ENCODE measurements at regions of chr9 and their contacts with region 1.

Region 1: GRCh38 chr9:3521966-3522365 is 3.8 kb downstream of the RFX3 start:
- DNase-seq: no peak
- H3K4me3 Mint-ChIP-seq: no peak overlapping the region
- H3K27ac Mint-ChIP-seq: no peak overlapping the region
- H3K4me1 Mint-ChIP-seq: no peaks in the 10 kb centered on the region
- H3K27me3 Mint-ChIP-seq: no peaks in the 10 kb centered on the region
- CTCF ChIP-seq: no peak

Region 2: DNA sequence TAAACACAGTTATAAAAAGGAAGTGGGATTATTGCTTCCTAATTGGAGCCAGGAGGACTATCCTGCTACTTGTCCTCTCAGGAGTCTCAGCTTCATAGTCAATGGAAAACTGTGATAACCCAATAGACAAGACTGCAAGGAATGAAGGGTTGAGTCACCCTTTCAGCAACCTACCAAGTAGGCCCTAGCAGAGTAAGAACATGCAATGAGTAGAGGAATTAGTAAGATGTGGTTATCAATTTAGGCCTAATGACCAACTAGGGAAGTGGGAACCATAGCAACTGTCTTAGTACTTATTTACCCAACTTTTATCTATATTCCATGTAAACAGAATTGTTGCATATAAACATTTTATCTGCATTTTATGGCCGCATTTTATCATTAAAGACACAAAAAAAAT is 306.3 kb before region 1 on chr9:
- CTCF ChIA-PET with region 1: no interaction called
- intact Hi-C with region 1: no loop called
- DNase-seq: no peak
- H3K4me3 Mint-ChIP-seq: no peak overlapping the region
- H3K27ac Mint-ChIP-seq: no peak overlapping the region
- H3K4me1 Mint-ChIP-seq: no peaks in the 10 kb centered on the region
- H3K27me3 Mint-ChIP-seq: peaks cover 13% of the 10 kb centered on the region
- CTCF ChIP-seq: no peak

Region 3: GRCh38 chr9:3292311-3292710 is 229.7 kb before region 1 on chr9:
- CTCF ChIA-PET with region 1: no interaction called
- intact Hi-C with region 1: no loop called
- DNase-seq: no peak
- H3K4me3 Mint-ChIP-seq: no peak overlapping the region
- H3K27ac Mint-ChIP-seq: no peak overlapping the region
- H3K4me1 Mint-ChIP-seq: no peaks in the 10 kb centered on the region
- H3K27me3 Mint-ChIP-seq: no peaks in the 10 kb centered on the region
- CTCF ChIP-seq: no peak

Region 4: DNA sequence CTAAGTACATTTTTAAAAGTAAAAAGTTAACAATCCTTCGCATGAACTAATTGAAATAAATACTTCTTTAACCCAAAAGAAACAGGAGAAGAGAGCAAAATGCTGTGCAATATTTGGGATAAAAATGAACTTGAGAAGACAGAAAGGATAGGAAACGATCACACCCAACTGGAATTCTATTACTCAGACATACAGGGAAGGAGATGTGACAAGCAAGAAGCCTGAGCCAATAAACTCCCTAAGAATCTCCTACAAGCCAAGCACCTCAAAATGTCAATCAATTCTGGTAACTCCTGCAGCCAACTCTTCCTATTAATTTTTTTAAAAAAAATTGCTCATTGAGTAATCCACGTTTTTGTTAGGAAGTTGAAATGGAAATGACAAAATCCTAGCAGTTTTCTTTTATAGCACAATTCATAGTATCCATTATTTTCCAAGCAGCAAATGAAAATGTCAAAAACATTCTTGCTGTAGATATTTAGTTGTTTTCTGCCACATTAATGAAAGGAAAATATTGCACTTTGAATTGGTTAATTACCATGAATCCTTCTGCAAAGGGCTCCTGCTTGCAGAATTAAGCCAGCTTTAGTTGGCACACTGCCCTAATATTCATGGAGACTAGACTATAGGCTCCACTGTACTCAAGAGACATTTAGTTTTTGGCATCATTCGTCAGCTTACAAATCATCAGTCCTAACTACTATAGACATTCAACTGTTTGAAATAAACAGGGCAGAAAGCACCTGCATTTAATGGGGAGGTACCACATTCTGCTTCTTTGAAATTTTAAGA is 85.1 kb before region 1 on chr9:
- CTCF ChIA-PET with region 1: no interaction called
- intact Hi-C with region 1: no loop called
- DNase-seq: no peak
- H3K4me3 Mint-ChIP-seq: no peak overlapping the region
- H3K27ac Mint-ChIP-seq: no peak overlapping the region
- H3K4me1 Mint-ChIP-seq: peaks cover 8% of the 10 kb centered on the region
- H3K27me3 Mint-ChIP-seq: no peaks in the 10 kb centered on the region
- CTCF ChIP-seq: no peak

Region 5: GRCh38 chr9:3478549-3478953 is 43.4 kb before region 1 on chr9:
- CTCF ChIA-PET with region 1: interaction called, 3 read pairs
- intact Hi-C with region 1: loop called (anchors 5 kb)
- DNase-seq: peak; percentile 25
- H3K4me3 Mint-ChIP-seq: no peak overlapping the region
- H3K27ac Mint-ChIP-seq: peak overlapping the region; percentile 93
- H3K4me1 Mint-ChIP-seq: peaks cover 41% of the 10 kb centered on the region
- H3K27me3 Mint-ChIP-seq: no peaks in the 10 kb centered on the region
- CTCF ChIP-seq: no peak

Region 6: GRCh38 chr9:3576328-3576727 is 54.4 kb after region 1 on chr9:
- CTCF ChIA-PET with region 1: no interaction called
- intact Hi-C with region 1: no loop called
- DNase-seq: no peak
- H3K4me3 Mint-ChIP-seq: no peak overlapping the region
- H3K27ac Mint-ChIP-seq: no peak overlapping the region
- H3K4me1 Mint-ChIP-seq: no peaks in the 10 kb centered on the region
- H3K27me3 Mint-ChIP-seq: no peaks in the 10 kb centered on the region
- CTCF ChIP-seq: no peak